K562 (cell line): ENCODE measurements at regions of chr1 and their contacts with region 1.

Region 1: DNA sequence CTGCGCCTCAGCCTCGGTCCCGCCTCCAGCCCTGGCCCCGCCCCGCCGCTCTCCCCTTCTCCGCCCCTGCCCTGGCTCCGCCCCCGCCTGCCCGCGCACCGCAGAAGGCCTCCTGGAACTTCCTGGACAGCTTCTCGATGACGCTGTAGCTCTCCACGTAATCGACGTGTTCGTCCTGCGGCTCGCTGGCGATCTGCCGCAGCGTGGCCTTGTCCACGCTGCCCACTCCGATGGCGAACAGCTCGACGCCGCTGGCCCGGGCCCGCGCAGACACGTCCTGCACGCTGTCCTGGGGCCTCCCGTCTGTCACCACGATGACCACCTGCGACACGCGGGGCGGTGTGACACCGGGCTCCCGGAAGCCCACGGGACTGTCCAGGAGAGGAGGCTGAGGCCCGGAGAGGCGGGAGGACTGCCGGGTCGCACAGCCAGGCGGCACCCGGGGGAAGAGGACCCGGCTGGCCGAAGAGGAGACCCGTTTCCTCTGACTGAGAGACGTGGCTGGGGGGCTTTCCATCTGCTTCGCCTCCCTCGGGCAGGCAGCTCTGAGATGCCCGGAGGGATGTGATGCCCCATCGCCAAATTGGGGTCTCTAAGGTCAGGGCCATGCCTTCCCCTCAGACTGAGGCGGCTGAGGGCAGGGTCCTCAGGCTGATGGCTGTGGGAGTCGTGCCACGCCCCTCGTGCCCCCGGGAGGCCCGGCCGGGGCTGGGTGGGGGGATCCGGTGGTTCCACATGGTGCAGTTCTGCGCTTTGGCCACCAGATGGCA is 4.6 kb downstream of the MATN1 start:
- DNase-seq: peak in 2 of 4 experiments; percentile 81 to 98
- ATAC-seq: peak; percentile 85
- H3K4me3 ChIP-seq: peak overlapping the region; percentile 61
- H3K27ac ChIP-seq: peak overlapping the region; percentile 95
- H3K4me1 ChIP-seq: peaks cover 37 to 63% of the 10 kb centered on the region in 2 experiments
- H3K27me3 ChIP-seq: no peaks in the 10 kb centered on the region
- CTCF ChIP-seq: peak in 2 of 3 experiments; percentile 93 to 96; a peak in 5 of 6 replicates
- EP300 ChIP-seq: no peak
- POLR2A ChIP-seq: peak; percentile 95
- RAD21 ChIP-seq: peak; percentile 99 to 100; a peak in 3 of 4 replicates

Region 2: DNA sequence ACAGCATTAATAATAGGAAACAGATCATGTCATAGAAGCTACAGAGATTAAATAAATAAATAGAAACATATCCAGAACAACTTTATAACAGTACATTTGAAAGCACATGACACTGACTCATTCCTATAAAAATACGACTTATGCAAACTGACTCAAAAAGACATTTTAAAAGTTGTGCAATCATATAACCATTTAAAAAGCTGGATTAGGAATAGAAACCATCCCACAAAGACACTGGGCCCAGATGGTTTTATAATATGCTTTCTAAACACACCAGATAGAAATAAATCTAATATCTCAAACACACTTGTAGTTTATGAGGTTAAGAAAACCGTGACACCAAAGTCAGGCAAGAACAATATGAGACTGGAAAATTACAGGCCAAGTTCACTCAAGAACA is 43.1 kb before region 1 on chr1:
- CTCF ChIA-PET with region 1: no interaction called
- POLR2A ChIA-PET with region 1: no interaction called
- in situ Hi-C with region 1: no loop called
- intact Hi-C with region 1: no loop called
- DNase-seq: no peak
- ATAC-seq: no peak
- H3K4me3 ChIP-seq: no peak overlapping the region
- H3K27ac ChIP-seq: no peak overlapping the region
- H3K4me1 ChIP-seq: no peaks in the 10 kb centered on the region
- H3K27me3 ChIP-seq: peaks cover 0 to 10% of the 10 kb centered on the region in 2 experiments; a peak in 2 of 5 replicates
- CTCF ChIP-seq: no peak
- EP300 ChIP-seq: no peak
- POLR2A ChIP-seq: no peak
- RAD21 ChIP-seq: no peak

Region 3: DNA sequence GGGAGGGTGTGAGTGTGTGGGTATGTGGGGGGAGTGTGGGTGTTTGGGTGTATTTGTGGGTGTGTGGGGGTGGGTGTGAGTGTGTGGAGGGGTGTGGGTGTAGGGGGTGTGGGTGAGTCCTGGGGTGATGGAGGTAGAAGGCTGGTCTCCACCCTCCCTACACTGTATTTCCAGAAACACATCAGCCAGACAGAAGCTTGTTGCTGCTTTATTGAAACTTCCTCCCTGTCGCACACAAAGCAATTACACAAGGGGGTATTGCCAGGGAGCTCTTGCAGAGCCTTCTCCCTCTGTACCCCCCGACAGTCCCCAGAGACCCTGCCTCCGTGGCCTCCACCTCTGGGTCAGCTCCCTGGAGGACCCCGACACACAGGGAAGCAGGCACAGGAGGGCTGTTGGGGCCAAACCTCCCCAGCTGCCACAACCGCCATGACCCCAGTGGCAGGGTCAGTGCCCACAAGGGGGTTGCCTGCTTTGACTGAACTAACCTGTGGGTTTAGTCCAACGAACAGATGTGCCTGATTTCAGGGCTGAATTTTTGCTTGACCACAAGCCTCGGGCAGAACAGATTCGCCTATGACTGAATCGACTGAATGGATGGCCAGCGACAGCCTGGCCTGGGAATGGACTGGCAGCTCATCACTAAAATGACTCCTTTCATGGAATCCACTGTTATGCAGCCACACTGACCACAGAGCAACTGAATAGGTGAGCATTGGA is 13.6 kb after region 1 on chr1:
- CTCF ChIA-PET with region 1: no interaction called
- POLR2A ChIA-PET with region 1: interaction called, 51 read pairs
- in situ Hi-C with region 1: no loop called
- intact Hi-C with region 1: no loop called
- DNase-seq: peak in 1 of 4 experiments; percentile 38
- ATAC-seq: no peak
- H3K4me3 ChIP-seq: peak overlapping the region; percentile 26
- H3K27ac ChIP-seq: peak overlapping the region; percentile 50; the same call in 2 of the 3 replicates
- H3K4me1 ChIP-seq: peaks cover 54 to 66% of the 10 kb centered on the region in 2 experiments
- H3K27me3 ChIP-seq: no peaks in the 10 kb centered on the region
- CTCF ChIP-seq: no peak
- EP300 ChIP-seq: no peak
- POLR2A ChIP-seq: no peak
- RAD21 ChIP-seq: no peak

Region 4: DNA sequence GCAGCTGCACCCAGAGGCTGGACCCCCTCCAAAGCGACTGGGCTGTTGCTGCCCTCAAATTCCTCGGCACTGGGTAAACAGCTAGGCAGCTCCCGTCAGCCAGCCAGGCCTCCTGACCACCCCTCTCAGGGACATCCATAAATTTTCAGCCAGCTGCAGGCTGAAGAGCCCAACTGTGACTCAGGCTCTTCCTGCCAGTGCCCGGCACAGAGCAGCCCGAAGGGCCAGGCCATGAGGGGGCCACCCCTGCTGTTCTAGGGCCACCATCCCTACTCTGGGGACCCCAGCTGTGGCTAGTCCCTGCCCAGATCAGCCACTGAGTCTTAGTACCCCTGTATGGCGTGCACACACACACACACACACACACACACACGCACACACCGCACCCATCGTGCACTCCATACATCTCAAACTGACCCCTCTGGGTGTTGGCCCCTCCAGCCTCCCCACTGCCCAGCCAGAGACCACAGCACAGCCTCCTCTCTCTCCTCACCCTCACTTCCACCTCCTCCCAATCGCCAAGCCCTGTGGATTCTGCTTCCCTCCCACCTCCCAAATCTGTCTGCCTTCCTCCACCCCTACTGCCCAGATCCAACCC is 44.9 kb after region 1 on chr1:
- CTCF ChIA-PET with region 1: no interaction called
- POLR2A ChIA-PET with region 1: interaction called, 30 read pairs
- in situ Hi-C with region 1: no loop called
- intact Hi-C with region 1: loop called (anchors 1 kb)
- DNase-seq: no peak
- ATAC-seq: no peak
- H3K4me3 ChIP-seq: no peak overlapping the region
- H3K27ac ChIP-seq: peak overlapping the region; percentile 78; the same call in 2 of the 3 replicates
- H3K4me1 ChIP-seq: peaks cover 67 to 88% of the 10 kb centered on the region in 2 experiments
- H3K27me3 ChIP-seq: no peaks in the 10 kb centered on the region; a peak in 1 of 5 replicates
- CTCF ChIP-seq: no peak
- EP300 ChIP-seq: no peak
- POLR2A ChIP-seq: no peak
- RAD21 ChIP-seq: no peak

Region 5: DNA sequence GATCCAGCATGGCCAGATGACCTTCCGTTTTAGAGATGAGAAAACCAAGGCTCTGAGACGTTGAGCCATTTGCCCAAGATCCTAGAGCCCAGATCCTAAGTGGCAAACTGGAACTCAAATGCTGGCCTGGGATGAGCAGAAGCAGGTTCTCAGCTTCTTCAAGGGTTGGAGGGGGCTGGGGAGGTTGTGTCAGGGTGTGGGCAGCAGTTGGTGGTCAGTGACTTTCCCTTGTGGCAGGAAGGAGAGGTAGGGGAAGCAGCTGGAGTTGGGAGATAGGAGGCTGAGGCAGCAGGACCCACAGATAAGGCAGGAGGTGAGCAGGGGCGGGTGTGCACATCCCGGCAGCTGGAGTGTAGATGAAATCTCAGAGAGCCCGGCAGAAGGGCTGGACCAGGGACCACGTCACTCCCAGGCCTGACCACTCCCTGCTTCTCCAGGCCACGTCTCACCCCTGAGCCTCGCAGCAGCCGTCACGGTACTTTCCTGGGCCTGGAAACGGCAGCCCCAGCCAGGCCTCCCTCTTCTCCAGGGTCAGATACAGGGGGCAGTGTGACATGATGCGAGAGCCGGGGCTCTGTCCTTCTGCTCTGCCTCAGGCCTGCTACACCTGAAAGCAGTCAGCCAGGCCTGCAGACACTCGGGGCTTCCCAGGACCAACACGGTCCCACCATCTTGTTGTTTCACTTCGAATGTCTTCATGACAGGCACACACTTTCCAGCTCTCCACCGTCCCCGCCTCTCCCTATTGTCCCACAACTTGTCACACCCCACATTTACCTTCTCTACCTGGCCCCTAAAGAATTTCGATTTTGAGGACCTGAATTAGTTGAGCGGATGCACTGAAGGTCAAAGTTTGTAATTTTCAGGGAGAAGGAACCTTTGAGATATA is 50.3 kb after region 1 on chr1:
- CTCF ChIA-PET with region 1: no interaction called
- POLR2A ChIA-PET with region 1: interaction called, 30 read pairs
- in situ Hi-C with region 1: no loop called
- intact Hi-C with region 1: loop called (anchors 2 kb)
- DNase-seq: peak; percentile 99 to 100 (median 100)
- ATAC-seq: peak; percentile 96
- H3K4me3 ChIP-seq: peak overlapping the region; percentile 4
- H3K27ac ChIP-seq: peak overlapping the region; percentile 98
- H3K4me1 ChIP-seq: peaks cover 56 to 68% of the 10 kb centered on the region in 2 experiments
- H3K27me3 ChIP-seq: no peaks in the 10 kb centered on the region; a peak in 1 of 5 replicates
- CTCF ChIP-seq: peak; percentile 41 to 52 (median 42); a peak in 3 of 6 replicates
- EP300 ChIP-seq: peak; percentile 100
- POLR2A ChIP-seq: peak; percentile 82
- RAD21 ChIP-seq: peak; percentile 39 to 47

Region 6: GRCh38 chr1:30786264-30786991 is 67.6 kb after region 1 on chr1:
- CTCF ChIA-PET with region 1: interaction called, 187 read pairs
- POLR2A ChIA-PET with region 1: interaction called, 23 read pairs
- in situ Hi-C with region 1: no loop called
- intact Hi-C with region 1: no loop called
- DNase-seq: no peak
- ATAC-seq: no peak
- H3K4me3 ChIP-seq: no peak overlapping the region
- H3K27ac ChIP-seq: no peak overlapping the region
- H3K4me1 ChIP-seq: peaks cover 15 to 34% of the 10 kb centered on the region in 2 experiments
- H3K27me3 ChIP-seq: peaks cover 0 to 4% of the 10 kb centered on the region in 2 experiments; a peak in 1 of 5 replicates
- CTCF ChIP-seq: no peak
- EP300 ChIP-seq: no peak
- POLR2A ChIP-seq: no peak
- RAD21 ChIP-seq: no peak

Region 7: GRCh38 chr1:30911046-30911954 is 192.5 kb after region 1 on chr1:
- CTCF ChIA-PET with region 1: interaction called, 29 read pairs
- POLR2A ChIA-PET with region 1: interaction called, 17 read pairs
- in situ Hi-C with region 1: loop called (anchors 5 kb)
- intact Hi-C with region 1: loop called (anchors 1 kb)
- DNase-seq: peak; percentile 80 to 94 (median 86)
- ATAC-seq: peak; percentile 78
- H3K4me3 ChIP-seq: no peak overlapping the region
- H3K27ac ChIP-seq: no peak overlapping the region
- H3K4me1 ChIP-seq: peaks cover 31 to 53% of the 10 kb centered on the region in 2 experiments
- H3K27me3 ChIP-seq: no peaks in the 10 kb centered on the region
- CTCF ChIP-seq: peak; percentile 96 to 97 (median 96)
- EP300 ChIP-seq: peak; percentile 31; the same call in 1 of the 2 replicates
- POLR2A ChIP-seq: no peak
- RAD21 ChIP-seq: peak; percentile 100